ENCODE measurements at regions of chr6 and their contacts with region 1.

Region 1: DNA sequence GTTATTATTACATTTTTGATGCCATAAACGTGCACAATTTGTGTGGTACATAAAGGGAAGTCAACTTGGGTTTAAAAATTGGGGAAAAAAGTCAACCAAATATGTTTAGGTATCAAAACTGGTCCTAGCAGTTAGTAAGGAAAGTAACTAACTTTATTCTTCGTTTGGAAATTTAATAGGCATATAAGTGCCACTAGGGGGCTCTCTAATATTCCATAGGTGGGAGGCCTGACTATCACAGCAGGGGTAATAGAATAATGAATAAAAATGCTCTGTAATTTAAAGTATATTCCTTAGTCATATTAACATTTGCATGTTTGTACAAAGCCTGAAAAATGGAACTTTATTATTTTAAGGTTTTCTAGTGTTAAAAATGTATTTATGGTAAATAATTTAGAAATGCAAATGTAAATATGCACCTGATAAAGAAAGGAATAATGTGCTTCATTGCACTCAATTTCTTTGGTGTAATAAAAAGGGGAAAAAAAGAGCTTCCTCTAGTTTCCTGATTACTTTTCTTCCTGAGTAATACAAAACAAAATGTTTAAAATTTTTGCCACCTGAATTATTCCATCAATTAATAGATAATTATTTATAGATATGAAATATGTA is 125.7 kb upstream of the HDAC2 start:
- DNase-seq: peak in 4 of 9 donors; percentile 1 to 13 (median 4)
- ATAC-seq: no peak
- H3K4me3 ChIP-seq: no peak overlapping the region
- H3K4me3 Mint-ChIP-seq: no peak overlapping the region
- H3K27ac ChIP-seq: no peak overlapping the region
- H3K27ac Mint-ChIP-seq: no peak overlapping the region
- H3K4me1 ChIP-seq: no peaks in the 10 kb centered on the region
- H3K4me1 Mint-ChIP-seq: no peaks in the 10 kb centered on the region
- H3K27me3 ChIP-seq: no peaks in the 10 kb centered on the region
- H3K27me3 Mint-ChIP-seq: peaks cover 0 to 14% (median 8%) of the 10 kb centered on the region in 5 donors

Region 2: DNA sequence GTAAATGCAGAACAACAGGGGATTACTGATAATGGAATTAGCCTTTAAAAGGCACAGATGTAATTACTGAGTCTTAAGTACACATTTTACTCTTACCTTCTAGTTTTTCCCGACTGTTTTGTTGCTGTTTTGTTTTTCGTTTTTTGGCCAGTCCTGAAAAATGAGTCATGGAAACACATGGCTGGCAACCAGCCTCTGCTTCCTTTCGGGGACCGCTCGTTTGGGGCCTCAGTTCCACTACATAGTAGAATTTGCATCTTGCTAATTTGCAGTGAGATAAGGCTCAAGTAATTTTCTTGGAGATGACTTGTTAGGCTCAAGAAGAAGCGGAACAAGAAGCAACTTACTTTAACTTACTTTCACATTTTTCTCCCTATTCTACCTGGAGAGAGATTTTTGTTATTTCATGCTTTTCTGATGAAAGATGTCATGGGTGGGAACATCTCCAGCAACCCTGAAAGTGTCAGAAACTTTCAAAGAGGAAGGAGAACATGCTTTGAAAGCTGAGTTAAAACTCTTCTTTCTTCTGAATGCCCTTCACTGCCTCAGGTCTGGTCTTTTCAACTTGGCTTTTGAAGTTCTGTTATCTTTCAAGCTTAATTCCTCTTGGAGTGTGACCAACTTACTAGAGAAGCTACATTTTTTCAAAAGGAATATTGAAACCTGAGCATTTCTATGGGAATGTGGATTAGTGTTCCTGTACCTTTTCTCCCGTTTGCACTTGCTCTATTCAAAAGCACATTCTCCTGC is 54.2 kb before region 1 on chr6:
- CTCF ChIA-PET with region 1: no interaction called
- POLR2A ChIA-PET with region 1: no interaction called
- intact Hi-C with region 1: loop called in 1 of 2 experiments (anchors 5 kb)
- DNase-seq: no peak
- ATAC-seq: no peak
- H3K4me3 ChIP-seq: no peak overlapping the region
- H3K4me3 Mint-ChIP-seq: no peak overlapping the region
- H3K27ac ChIP-seq: no peak overlapping the region
- H3K27ac Mint-ChIP-seq: no peak overlapping the region
- H3K4me1 ChIP-seq: no peaks in the 10 kb centered on the region
- H3K4me1 Mint-ChIP-seq: no peaks in the 10 kb centered on the region
- H3K27me3 ChIP-seq: no peaks in the 10 kb centered on the region
- H3K27me3 Mint-ChIP-seq: peaks cover 0 to 18% (median 8%) of the 10 kb centered on the region in 5 donors

Region 3: GRCh38 chr6:114084322-114084890 is 12.3 kb before region 1 on chr6:
- CTCF ChIA-PET with region 1: no interaction called
- POLR2A ChIA-PET with region 1: no interaction called
- intact Hi-C with region 1: no loop called
- DNase-seq: no peak
- ATAC-seq: no peak
- H3K4me3 ChIP-seq: no peak overlapping the region
- H3K4me3 Mint-ChIP-seq: no peak overlapping the region
- H3K27ac ChIP-seq: no peak overlapping the region
- H3K27ac Mint-ChIP-seq: no peak overlapping the region
- H3K4me1 ChIP-seq: no peaks in the 10 kb centered on the region
- H3K4me1 Mint-ChIP-seq: no peaks in the 10 kb centered on the region
- H3K27me3 ChIP-seq: no peaks in the 10 kb centered on the region
- H3K27me3 Mint-ChIP-seq: peaks cover 9 to 31% (median 17%) of the 10 kb centered on the region in 5 donors

Region 4: DNA sequence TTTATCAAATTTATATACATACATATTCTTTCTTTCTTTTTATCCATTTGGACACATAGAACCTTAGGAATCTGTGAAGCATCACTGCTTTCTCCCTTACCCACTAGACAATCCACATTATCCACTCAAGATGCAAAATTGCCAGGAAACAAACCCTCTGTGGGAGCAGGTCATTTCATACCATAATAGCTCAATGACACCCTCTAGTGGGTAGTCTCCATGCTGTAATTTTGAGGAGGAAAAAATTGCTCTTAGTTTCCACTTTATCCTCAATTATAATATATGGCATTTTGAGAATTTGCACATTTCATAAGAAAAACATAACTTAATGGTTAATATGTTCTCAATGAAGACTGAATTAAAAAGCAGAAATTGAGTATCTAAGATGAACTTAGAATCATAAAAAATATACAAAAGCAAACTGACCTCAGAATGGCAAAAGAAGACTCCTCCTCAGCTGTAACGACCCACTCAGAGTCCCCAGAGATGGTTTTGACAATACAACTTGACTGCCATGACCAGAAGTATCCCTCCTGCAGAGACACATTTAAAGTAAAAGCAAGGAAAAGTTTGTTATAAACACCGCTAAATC is 1800.0 kb after region 1 on chr6:
- CTCF ChIA-PET with region 1: no interaction called
- POLR2A ChIA-PET with region 1: no interaction called
- intact Hi-C with region 1: loop called in 1 of 2 experiments (anchors 2 kb)
- DNase-seq: no peak
- ATAC-seq: no peak
- H3K4me3 ChIP-seq: no peak overlapping the region
- H3K4me3 Mint-ChIP-seq: no peak overlapping the region
- H3K27ac ChIP-seq: no peak overlapping the region
- H3K27ac Mint-ChIP-seq: no peak overlapping the region
- H3K4me1 ChIP-seq: no peaks in the 10 kb centered on the region
- H3K4me1 Mint-ChIP-seq: peaks cover 0 to 1% (median 0%) of the 10 kb centered on the region in 7 donors
- H3K27me3 ChIP-seq: no peaks in the 10 kb centered on the region
- H3K27me3 Mint-ChIP-seq: peaks cover 0 to 9% (median 0%) of the 10 kb centered on the region in 5 donors

Measured in naive thymus-derived CD4-positive, alpha-beta T cell (primary cell).